ENCODE measurements at regions of chr2 and their contacts with region 1.

Region 1: GRCh38 chr2:230798769-230799399 is 65.9 kb upstream of the ITM2C start:
- DNase-seq: no peak
- H3K4me3 ChIP-seq: no peak overlapping the region
- H3K27ac ChIP-seq: no peak overlapping the region
- H3K4me1 ChIP-seq: peaks cover 0 to 1% (median 0%) of the 10 kb centered on the region in 4 experiments; a peak in 1 of 7 replicates
- H3K27me3 ChIP-seq: no peaks in the 10 kb centered on the region
- CTCF ChIP-seq: peak in 2 of 3 experiments; percentile 55 to 62; a peak in 2 of 4 replicates
- EP300 ChIP-seq: no peak
- POLR2A ChIP-seq: no peak
- RAD21 ChIP-seq: peak; percentile 81 to 84

Region 2: DNA sequence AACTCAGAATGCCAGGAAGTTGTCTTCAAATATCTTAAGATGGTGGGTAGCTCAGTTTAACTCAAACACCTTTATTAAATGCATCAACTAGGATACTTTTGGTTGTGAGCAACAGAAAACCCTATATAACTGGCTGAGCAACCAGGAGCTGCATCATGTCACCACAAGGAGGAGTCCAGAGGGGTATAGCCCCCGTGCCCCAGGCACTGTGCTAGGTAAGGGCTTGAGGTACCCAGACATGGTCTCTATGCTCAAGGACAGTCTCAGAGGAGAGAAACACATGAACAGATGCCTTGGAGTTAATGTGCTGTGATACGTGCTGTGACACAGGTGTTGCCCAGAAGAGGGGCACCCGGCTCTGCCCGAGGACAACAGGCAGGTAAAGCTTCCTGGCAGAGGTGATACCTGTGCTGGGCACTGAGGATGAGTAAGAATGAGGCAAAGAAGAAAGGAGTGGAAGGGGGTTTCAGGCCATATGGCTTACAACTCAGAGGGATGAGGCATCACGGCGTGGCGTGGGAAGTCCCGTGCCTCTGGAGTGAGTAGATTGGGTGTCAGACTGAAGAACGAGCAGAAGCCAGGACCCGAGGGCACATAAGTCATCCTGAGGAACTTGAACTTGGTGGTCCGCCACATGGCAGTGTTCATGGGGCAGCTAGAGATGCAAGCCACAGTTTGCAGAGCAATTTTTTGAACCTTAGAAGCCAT is 118.3 kb before region 1 on chr2:
- CTCF ChIA-PET with region 1: interaction called, 16 read pairs
- POLR2A ChIA-PET with region 1: no interaction called
- DNase-seq: no peak
- H3K4me3 ChIP-seq: no peak overlapping the region
- H3K27ac ChIP-seq: no peak overlapping the region
- H3K4me1 ChIP-seq: no peaks in the 10 kb centered on the region
- H3K27me3 ChIP-seq: no peaks in the 10 kb centered on the region
- CTCF ChIP-seq: peak; percentile 11 to 19 (median 16); a peak in 2 of 4 replicates
- EP300 ChIP-seq: no peak
- POLR2A ChIP-seq: no peak
- RAD21 ChIP-seq: peak in 1 of 2 experiments; percentile 23; a peak in 1 of 4 replicates

Region 3: GRCh38 chr2:230712443-230713330 is 86.2 kb before region 1 on chr2 and contains the start of gene CAB39:
- CTCF ChIA-PET with region 1: interaction called, 23 read pairs
- POLR2A ChIA-PET with region 1: no interaction called
- DNase-seq: peak; percentile 73 to 86
- H3K4me3 ChIP-seq: peak within 1 kb of the TSS; percentile 73 to 92 (median 88)
- H3K27ac ChIP-seq: no peak within 1 kb of the TSS
- H3K4me1 ChIP-seq: peaks cover 4 to 13% (median 5%) of the 10 kb centered on the region in 4 experiments; a peak in 6 of 7 replicates
- H3K27me3 ChIP-seq: no peaks in the 10 kb centered on the region
- CTCF ChIP-seq: peak; percentile 87 to 95 (median 87)
- EP300 ChIP-seq: peak in 1 of 2 experiments; percentile 19; a peak in 1 of 3 replicates
- POLR2A ChIP-seq: peak in 1 of 2 experiments; percentile 34; a peak in 2 of 3 replicates
- RAD21 ChIP-seq: peak; percentile 34 to 61
- total RNA-seq, gene CAB39: 48.3 and 50.5 TPM in 2 replicates

Region 4: GRCh38 chr2:230814616-230815015 is 15.7 kb after region 1 on chr2:
- CTCF ChIA-PET with region 1: interaction called, 44 read pairs
- POLR2A ChIA-PET with region 1: no interaction called
- DNase-seq: no peak
- H3K4me3 ChIP-seq: no peak overlapping the region
- H3K27ac ChIP-seq: no peak overlapping the region
- H3K4me1 ChIP-seq: peaks cover 0 to under 1% (median 0%) of the 10 kb centered on the region in 4 experiments; a peak in 1 of 7 replicates
- H3K27me3 ChIP-seq: no peaks in the 10 kb centered on the region
- CTCF ChIP-seq: peak in 2 of 3 experiments; percentile 28; a peak in 2 of 4 replicates
- EP300 ChIP-seq: no peak
- POLR2A ChIP-seq: no peak
- RAD21 ChIP-seq: peak; percentile 54 to 60